Lower lobe of right lung (tissue), 2 donors: ENCODE measurements at regions of chr7 and their contacts with region 1.

Region 1: GRCh38 chr7:35399840-35400239 is 145.9 kb upstream of the TBX20 start:
- DNase-seq: no peak
- ATAC-seq: no peak
- H3K4me3 ChIP-seq: no peak overlapping the region
- H3K27ac ChIP-seq: no peak overlapping the region
- H3K4me1 ChIP-seq: no peaks in the 10 kb centered on the region
- H3K27me3 ChIP-seq: no peaks in the 10 kb centered on the region
- CTCF ChIP-seq: no peak

Region 2: GRCh38 chr7:35261476-35262285 is 138.2 kb before region 1 on chr7:
- intact Hi-C with region 1: loop called (anchors 5 kb)
- DNase-seq: no peak
- ATAC-seq: peak in 1 of 2 donors; percentile 22
- H3K4me3 ChIP-seq: no peak overlapping the region
- H3K27ac ChIP-seq: no peak overlapping the region
- H3K4me1 ChIP-seq: no peaks in the 10 kb centered on the region
- H3K27me3 ChIP-seq: peaks cover 88% of the 10 kb centered on the region
- CTCF ChIP-seq: no peak